ENCODE measurements at regions of chr16 and their contacts with region 1.

Region 1: GRCh38 chr16:11255737-11256660 is at the start of gene SOCS1:
- DNase-seq: peak; percentile 86
- H3K4me3 ChIP-seq: peak within 1 kb of the TSS; percentile 73 to 93
- H3K27ac ChIP-seq: peak within 1 kb of the TSS; percentile 98 to 99
- H3K4me1 ChIP-seq: no peaks in the 10 kb centered on the region
- H3K27me3 ChIP-seq: no peaks in the 10 kb centered on the region
- CTCF ChIP-seq: peak; percentile 82 to 97 (median 94)
- POLR2A ChIP-seq: peak; percentile 87
- total RNA-seq, gene SOCS1: 2.6 to 8.2 TPM

Region 2: GRCh38 chr16:10883004-10883403 is 373.0 kb before region 1 on chr16:
- intact Hi-C with region 1: no loop called
- DNase-seq: no peak
- H3K4me3 ChIP-seq: no peak overlapping the region
- H3K27ac ChIP-seq: no peak overlapping the region
- H3K4me1 ChIP-seq: no peaks in the 10 kb centered on the region
- H3K27me3 ChIP-seq: no peaks in the 10 kb centered on the region
- CTCF ChIP-seq: no peak
- POLR2A ChIP-seq: peak; percentile 20

Region 3: GRCh38 chr16:11105038-11105903 is 150.7 kb before region 1 on chr16:
- intact Hi-C with region 1: loop called (anchors 10 kb)
- DNase-seq: peak; percentile 9
- H3K4me3 ChIP-seq: no peak overlapping the region
- H3K27ac ChIP-seq: no peak overlapping the region
- H3K4me1 ChIP-seq: no peaks in the 10 kb centered on the region
- H3K27me3 ChIP-seq: no peaks in the 10 kb centered on the region
- CTCF ChIP-seq: no peak
- POLR2A ChIP-seq: no peak

Region 4: DNA sequence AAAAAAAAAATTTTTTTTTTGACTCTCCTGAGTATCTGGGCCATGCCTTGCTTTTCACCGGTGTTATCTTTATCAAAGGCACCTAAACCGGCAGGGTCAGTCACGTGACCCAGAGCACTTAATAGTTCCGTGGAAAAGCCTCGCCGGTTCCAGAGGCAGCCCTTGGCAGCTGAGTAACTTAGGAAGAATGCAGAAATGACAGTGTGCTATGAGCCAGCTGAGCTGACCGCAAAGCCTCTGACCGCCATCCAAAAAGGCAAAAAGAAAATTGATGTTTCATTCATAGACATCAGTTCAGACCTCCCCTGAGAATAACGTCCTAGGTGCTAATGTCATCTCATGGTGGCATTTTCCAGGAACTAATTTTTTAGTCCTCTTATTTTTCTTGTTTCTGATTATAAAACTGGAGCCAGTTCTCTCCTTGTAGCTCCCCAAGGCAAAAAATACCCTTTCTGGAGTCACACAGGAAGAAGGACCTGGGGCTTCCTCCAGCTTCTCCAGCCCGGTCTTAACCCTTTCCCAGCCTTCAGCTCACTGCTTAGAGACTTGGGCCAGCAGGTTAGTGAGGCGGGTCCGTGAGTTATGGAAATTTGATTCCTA is 122.6 kb before region 1 on chr16:
- intact Hi-C with region 1: loop called (anchors 10 kb)
- DNase-seq: peak; percentile 79
- H3K4me3 ChIP-seq: no peak overlapping the region
- H3K27ac ChIP-seq: peak overlapping the region in 1 of 2 donors; percentile 29
- H3K4me1 ChIP-seq: no peaks in the 10 kb centered on the region
- H3K27me3 ChIP-seq: no peaks in the 10 kb centered on the region
- CTCF ChIP-seq: no peak
- POLR2A ChIP-seq: no peak

Region 5: DNA sequence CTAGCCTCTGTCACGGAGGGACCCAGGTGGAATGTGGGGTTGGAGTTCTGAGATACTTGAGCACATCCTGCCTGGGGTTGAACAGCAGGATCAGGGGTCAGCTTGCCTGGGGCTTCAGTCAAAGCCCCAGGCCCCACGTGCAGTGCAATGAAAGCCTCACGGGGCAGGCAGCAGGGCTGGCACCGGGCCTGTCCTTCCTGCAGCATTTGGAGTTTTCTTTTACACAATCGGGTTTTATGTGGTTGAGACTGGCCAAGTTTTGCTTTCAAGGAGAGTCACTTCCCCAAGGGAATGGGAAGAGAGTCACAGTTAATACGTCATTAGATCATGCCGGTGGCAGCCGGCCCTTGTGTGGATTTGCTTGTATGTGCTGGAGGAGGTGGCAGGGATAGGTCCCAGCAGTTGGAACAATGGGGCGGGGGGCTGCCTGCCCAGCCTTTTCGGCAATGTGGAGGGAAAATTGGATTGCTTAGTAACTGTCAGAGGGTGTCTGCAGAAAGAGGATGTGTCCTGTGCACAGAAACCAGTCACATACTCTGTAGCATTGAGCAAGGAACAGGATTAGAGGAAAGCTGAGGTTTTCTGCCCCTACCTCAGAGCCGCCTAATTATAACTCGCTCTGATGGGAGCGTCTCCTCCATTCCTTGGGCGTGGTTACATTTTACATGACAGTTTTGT is 93.7 kb after region 1 on chr16:
- intact Hi-C with region 1: loop called (anchors 2 kb)
- DNase-seq: peak; percentile 81
- H3K4me3 ChIP-seq: no peak overlapping the region
- H3K27ac ChIP-seq: peak overlapping the region; percentile 76 to 78
- H3K4me1 ChIP-seq: peaks cover 8% of the 10 kb centered on the region
- H3K27me3 ChIP-seq: no peaks in the 10 kb centered on the region
- CTCF ChIP-seq: no peak
- POLR2A ChIP-seq: no peak

Measured in prostate gland (tissue), 2 donors.